ENCODE measurements at regions of chr2 and their contacts with region 1.

Region 1: DNA sequence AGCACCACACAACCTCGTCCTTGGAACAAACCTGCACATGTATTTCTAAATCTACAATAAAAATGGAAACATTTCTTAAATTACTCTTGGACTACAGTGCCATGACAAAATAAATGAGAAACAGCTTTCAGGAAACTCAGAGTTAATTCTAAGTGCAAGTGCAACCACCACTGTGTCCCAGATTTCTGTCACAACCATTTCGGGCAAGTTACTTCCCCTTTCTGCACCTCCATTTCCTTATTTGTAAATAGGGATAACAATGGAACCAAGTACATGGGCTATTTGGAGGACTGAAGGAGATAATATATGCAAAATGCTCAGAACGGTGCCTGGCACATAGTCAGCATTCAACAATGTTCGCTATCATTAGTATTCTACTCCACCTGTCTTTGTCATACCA is 93.2 kb downstream of the CACNB4 start:
- DNase-seq: no peak
- H3K4me3 Mint-ChIP-seq: no peak overlapping the region
- H3K27ac Mint-ChIP-seq: no peak overlapping the region
- H3K4me1 Mint-ChIP-seq: peaks cover 12% of the 10 kb centered on the region
- H3K27me3 Mint-ChIP-seq: peaks cover 8% of the 10 kb centered on the region

Region 2: GRCh38 chr2:151976945-151977353 is 28.7 kb before region 1 on chr2:
- CTCF ChIA-PET with region 1: interaction called, 3 read pairs
- POLR2A ChIA-PET with region 1: no interaction called
- intact Hi-C with region 1: loop called (anchors 2 kb)
- DNase-seq: peak; percentile 60
- H3K4me3 Mint-ChIP-seq: no peak overlapping the region
- H3K27ac Mint-ChIP-seq: no peak overlapping the region
- H3K4me1 Mint-ChIP-seq: peaks cover 8% of the 10 kb centered on the region
- H3K27me3 Mint-ChIP-seq: peaks cover 13% of the 10 kb centered on the region

Measured in activated CD4-positive, alpha-beta memory T cell treated with anti-CD3 and anti-CD28 coated beads for 36 hours (primary cell).